ENCODE measurements at regions of chr2 and their contacts with region 1.

Region 1: GRCh38 chr2:102020596-102021181 is 28.9 kb downstream of the IL1R2 start:
- DNase-seq: no peak
- H3K4me3 ChIP-seq: no peak overlapping the region
- CTCF ChIP-seq: peak; percentile 98

Region 2: DNA sequence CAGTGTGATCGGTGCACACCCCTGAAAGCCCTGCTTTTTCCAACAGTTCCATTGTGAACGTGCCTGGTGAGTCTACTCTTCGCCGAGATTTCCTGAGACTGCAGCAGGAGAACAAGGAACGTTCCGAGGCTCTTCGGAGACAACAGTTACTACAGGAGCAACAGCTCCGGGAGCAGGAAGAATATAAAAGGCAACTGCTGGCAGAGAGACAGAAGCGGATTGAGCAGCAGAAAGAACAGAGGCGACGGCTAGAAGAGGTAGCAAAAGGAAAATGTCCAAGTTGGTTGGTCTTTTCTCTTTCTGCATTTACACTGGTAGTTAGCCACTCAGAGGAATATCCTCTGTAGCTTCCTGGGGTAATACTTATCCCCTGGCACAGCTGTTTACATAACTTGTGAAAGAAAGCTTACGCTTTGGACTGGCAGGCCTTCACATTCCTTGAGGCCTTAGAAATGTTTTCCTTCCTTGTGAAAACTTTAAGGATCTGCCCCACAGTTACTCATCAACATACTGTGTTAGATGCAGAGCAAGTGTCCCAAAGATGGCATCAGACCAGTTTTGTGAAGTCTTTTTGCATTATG is 176.5 kb before region 1 on chr2:
- CTCF ChIA-PET with region 1: no interaction called
- POLR2A ChIA-PET with region 1: no interaction called
- DNase-seq: peak; percentile 86
- H3K4me3 ChIP-seq: no peak overlapping the region
- CTCF ChIP-seq: no peak

Region 3: GRCh38 chr2:102005989-102006885 is 14.5 kb before region 1 on chr2:
- CTCF ChIA-PET with region 1: interaction called, 57 read pairs
- POLR2A ChIA-PET with region 1: no interaction called
- DNase-seq: no peak
- H3K4me3 ChIP-seq: no peak overlapping the region
- CTCF ChIP-seq: peak; percentile 64

Region 4: GRCh38 chr2:102050854-102051391 is 30.2 kb after region 1 on chr2:
- CTCF ChIA-PET with region 1: interaction called, 11 read pairs
- POLR2A ChIA-PET with region 1: no interaction called
- DNase-seq: no peak
- H3K4me3 ChIP-seq: no peak overlapping the region
- CTCF ChIP-seq: no peak

Region 5: DNA sequence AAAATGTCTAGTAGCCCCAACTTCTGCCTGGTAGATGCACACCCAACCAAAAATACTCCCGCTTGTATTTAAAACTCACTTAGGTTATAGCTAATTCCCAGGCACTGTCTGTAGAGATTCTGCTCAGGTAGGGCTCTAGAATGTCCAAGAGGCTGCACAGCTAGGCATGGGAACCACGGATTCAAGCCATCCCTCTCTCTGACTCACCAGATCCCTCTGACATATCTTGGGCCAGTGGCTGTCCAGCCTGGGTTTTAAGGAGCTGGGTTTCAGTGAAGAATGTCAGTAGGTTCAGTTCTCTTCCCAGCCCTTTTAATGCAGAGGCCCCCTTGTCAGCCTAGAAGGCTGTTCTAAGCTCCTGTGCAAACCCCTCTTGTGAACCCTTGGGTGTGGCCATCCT is 106.0 kb after region 1 on chr2:
- CTCF ChIA-PET with region 1: interaction called, 18 read pairs
- POLR2A ChIA-PET with region 1: no interaction called
- DNase-seq: no peak
- H3K4me3 ChIP-seq: no peak overlapping the region
- CTCF ChIP-seq: no peak

Region 6: DNA sequence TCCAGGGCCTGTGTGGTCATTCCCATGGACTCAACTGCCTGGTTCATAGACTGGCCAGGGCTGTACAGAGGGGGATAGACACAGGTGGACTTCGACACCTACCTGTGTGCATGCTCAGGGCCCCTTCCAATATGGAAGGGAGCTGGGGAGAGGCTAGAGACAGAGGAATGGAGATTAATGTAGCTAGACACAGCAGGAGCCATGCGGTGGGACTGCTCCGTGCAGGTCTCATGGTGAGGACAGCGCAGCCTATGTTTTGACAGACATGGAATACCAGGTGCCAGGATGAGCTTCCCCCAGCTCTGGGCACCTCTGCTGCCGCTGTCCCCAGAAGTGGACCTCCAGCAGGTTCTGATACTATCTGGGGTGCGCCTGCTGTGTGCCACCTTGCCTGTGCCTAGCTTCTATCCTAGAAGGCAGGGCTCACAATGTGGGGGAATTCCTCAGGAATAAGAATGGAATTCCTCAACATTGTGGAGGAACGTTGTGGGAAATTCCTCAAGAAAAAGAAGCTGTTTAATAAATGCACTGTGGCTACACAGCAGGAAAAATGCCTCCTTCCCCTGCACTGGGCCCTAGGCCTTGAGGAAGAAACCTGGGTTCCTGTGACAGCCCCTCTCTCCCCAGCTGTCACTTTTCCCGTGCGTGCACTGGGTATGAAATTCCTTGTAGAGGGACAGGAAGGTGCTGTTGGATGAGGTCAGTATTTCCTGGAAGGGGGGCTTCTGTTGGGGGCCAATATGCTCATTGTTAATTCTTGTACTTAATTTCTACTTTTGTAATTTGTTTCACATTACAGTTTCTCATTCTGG is 129.2 kb after region 1 on chr2:
- CTCF ChIA-PET with region 1: interaction called, 298 read pairs
- POLR2A ChIA-PET with region 1: no interaction called
- DNase-seq: no peak
- H3K4me3 ChIP-seq: no peak overlapping the region
- CTCF ChIP-seq: no peak

Region 7: DNA sequence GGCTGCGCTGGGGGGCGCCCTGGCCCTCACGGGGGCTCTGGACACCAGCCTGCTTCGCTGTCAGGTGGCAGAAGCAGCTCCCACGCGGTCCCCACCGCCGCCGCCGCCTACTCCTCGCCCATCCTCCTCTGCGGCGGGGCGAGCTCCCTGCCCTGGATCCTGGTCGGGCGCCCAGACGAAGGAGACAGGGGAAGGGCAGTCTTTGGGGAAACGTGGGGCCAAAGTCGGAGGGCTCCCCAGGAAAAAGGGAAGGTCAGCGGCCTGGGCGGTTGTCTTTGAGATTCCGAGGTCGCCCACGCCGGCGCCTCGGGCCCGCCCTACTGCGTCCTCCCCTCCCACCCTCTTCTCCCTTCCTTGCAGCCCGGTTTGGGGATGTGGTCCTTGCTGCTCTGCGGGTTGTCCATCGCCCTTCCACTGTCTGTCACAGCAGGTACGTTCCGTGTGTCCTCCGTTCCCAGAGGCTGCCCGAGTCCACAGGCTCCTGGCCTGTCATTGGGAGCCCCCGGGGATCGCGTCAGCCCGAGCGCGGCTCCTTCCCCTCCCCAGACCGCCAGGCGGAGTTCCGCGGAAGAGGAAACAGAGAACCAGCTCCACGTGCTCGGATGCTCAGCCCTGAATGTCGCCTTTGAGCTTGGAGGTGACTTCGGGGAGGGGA is 166.9 kb after region 1 on chr2:
- CTCF ChIA-PET with region 1: interaction called, 11 read pairs
- POLR2A ChIA-PET with region 1: no interaction called
- DNase-seq: no peak
- H3K4me3 ChIP-seq: peak overlapping the region; percentile 57
- CTCF ChIP-seq: peak; percentile 46

Region 8: DNA sequence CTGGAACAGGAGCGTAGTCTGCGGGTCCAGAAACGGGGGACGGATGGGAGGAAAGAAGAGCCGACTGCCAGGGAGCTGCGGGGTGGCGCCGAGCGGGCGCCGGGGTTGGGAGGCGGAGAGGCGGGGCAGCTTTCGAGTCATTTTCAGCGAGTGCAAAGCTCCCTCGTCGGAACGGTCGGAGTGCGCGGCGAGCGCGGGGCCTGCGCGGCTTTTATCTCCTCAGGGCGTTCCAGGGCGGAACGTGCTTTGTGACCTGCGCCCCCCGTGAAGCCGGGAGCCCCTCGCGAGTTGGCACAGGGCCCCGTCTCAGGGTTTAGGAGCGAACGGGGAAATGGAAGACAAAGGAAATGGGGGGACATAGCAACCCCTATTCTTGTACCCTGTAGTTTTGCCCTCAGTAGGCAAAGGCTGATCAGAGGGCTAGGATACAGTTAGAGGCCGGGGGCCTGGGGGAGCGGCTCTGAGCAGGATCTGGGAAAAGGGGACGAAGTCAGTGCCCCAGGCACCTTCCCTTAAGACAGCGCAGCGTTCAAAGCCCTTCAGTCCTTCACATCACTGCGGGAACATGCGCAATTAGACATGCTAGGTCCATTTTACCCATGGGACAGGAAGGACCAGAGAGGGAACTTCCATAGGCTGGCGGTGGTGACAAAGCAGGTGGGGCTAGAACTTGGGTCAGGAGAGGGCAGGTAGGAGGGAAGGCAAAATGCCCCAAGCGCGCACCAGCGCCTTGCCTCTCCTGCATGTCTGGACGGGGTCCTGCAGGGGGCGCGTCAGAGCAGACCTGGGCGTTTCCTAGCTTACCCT is 230.6 kb after region 1 on chr2:
- CTCF ChIA-PET with region 1: interaction called, 15 read pairs
- POLR2A ChIA-PET with region 1: no interaction called
- DNase-seq: no peak
- H3K4me3 ChIP-seq: peak overlapping the region; percentile 52
- CTCF ChIP-seq: peak; percentile 58